ENCODE measurements at regions of chr1 and their contacts with region 1.

Region 1: DNA sequence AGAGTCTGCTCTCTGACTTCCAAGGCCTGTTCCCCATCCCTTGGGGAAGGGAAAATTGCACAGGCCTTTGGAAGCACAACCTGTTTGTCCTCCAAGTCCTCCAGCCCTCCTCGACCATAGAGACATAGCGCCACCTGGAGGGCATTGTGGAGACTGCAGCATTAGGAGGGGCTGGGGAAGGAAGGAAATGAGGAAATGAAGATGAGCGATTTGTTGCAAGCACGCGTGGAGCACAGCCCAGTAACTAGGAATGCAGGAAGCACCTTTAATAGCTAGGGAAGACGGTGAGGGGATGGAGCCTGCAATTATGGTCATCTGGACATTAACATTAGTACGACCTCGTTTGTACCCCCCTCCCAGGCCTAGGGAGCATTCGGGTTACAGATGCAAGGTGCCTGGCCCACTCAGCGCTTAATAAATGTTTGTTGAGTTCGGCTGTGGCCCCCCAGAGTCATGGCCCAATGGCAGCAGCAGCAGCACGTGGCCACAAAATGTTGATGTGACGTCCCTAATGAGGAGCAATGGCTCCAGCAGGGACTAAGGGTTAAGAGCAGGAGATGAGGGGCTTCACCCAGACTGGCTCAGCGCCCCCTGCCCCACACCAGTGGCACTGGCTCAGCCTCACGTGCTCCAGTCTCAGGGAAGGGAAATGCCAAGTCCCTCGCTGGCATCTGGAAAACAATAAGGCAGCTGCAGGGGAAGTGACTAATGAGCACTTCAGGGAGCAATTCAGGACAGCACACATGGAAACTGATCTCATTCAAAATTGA is 8.0 kb upstream of the CAMK2N1 start:
- DNase-seq: peak; percentile 85 to 87
- H3K4me3 ChIP-seq: no peak overlapping the region
- H3K27ac ChIP-seq: peak overlapping the region in 1 of 2 donors; percentile 38
- H3K4me1 ChIP-seq: no peaks in the 10 kb centered on the region
- H3K27me3 ChIP-seq: no peaks in the 10 kb centered on the region
- CTCF ChIP-seq: peak; percentile 94 to 98 (median 98)
- POLR2A ChIP-seq: no peak

Region 2: GRCh38 chr1:19918057-19918456 is 576.0 kb before region 1 on chr1:
- intact Hi-C with region 1: loop called (anchors 10 kb)
- DNase-seq: peak; percentile 79 to 81
- H3K4me3 ChIP-seq: no peak overlapping the region
- H3K27ac ChIP-seq: no peak overlapping the region
- H3K4me1 ChIP-seq: no peaks in the 10 kb centered on the region
- H3K27me3 ChIP-seq: no peaks in the 10 kb centered on the region
- CTCF ChIP-seq: peak; percentile 88 to 93 (median 89)
- POLR2A ChIP-seq: no peak

Region 3: GRCh38 chr1:20212685-20213331 is 281.2 kb before region 1 on chr1:
- intact Hi-C with region 1: loop called (anchors 10 kb)
- DNase-seq: peak; percentile 20 to 25
- H3K4me3 ChIP-seq: no peak overlapping the region
- H3K27ac ChIP-seq: no peak overlapping the region
- H3K4me1 ChIP-seq: no peaks in the 10 kb centered on the region
- H3K27me3 ChIP-seq: no peaks in the 10 kb centered on the region
- CTCF ChIP-seq: peak; percentile 42 to 71 (median 54)
- POLR2A ChIP-seq: no peak

Region 4: DNA sequence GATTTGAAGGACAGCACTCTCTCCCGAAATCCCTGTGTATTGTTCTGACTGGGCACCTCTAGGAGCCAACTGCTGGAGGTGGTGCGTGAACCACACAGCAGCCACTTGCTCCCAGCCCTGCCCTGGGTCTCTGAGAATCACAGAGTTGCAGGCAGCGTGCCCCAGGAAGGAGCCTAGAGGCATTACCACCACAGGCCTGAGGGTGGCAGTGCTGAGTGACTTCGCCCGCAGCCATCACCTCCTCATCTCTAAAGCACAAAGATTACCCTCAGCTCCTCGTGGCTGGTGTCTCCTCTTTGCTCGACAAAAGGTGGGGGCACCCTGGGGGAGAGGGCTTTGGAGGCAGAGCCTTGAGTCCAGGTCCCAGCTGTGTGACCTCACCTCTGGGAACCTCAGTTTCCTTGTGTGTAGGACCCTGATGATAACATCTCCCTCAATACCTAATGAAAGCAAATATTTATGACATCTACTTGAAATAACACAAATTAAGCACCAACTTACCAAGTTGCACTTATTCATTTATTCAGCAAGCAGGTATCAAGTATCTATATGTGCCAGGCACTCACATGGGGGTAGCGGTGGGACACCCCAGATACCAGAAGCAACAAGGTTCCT is 117.0 kb before region 1 on chr1:
- intact Hi-C with region 1: loop called (anchors 10 kb)
- DNase-seq: peak in 1 of 2 donors; percentile 34
- H3K4me3 ChIP-seq: no peak overlapping the region
- H3K27ac ChIP-seq: no peak overlapping the region
- H3K4me1 ChIP-seq: no peaks in the 10 kb centered on the region
- H3K27me3 ChIP-seq: no peaks in the 10 kb centered on the region
- CTCF ChIP-seq: peak; percentile 50 to 64 (median 57)
- POLR2A ChIP-seq: no peak

Region 5: DNA sequence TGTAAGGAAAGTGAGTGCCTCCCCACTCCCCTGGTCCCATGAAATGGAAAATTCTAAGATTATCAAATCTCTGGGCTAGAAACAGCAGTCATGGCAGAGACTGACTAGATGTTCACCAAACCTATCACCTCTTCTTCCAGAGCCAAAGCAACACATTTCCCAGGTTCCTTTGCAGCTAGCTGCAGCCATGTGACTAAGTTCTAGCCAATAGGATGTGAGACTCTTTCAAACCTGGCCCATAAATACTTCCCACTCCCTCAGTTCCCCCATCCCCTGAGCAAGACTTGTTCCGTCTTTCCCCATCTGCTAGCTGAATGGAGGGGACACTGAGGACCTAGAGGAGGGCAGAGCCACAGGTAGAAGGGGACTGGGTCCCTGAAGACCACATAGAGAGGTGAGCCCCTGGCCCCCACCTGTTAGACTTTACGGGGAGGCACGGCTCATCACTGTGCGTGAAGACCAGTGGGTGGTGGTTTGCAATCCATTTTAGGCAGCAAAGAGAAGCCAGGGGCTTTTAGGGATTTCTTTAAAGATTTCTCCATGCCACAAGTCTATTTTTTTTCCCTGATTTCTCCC is 75.6 kb after region 1 on chr1:
- intact Hi-C with region 1: no loop called
- DNase-seq: no peak
- H3K4me3 ChIP-seq: no peak overlapping the region
- H3K27ac ChIP-seq: no peak overlapping the region
- H3K4me1 ChIP-seq: no peaks in the 10 kb centered on the region
- H3K27me3 ChIP-seq: no peaks in the 10 kb centered on the region
- CTCF ChIP-seq: no peak
- POLR2A ChIP-seq: no peak

Region 6: DNA sequence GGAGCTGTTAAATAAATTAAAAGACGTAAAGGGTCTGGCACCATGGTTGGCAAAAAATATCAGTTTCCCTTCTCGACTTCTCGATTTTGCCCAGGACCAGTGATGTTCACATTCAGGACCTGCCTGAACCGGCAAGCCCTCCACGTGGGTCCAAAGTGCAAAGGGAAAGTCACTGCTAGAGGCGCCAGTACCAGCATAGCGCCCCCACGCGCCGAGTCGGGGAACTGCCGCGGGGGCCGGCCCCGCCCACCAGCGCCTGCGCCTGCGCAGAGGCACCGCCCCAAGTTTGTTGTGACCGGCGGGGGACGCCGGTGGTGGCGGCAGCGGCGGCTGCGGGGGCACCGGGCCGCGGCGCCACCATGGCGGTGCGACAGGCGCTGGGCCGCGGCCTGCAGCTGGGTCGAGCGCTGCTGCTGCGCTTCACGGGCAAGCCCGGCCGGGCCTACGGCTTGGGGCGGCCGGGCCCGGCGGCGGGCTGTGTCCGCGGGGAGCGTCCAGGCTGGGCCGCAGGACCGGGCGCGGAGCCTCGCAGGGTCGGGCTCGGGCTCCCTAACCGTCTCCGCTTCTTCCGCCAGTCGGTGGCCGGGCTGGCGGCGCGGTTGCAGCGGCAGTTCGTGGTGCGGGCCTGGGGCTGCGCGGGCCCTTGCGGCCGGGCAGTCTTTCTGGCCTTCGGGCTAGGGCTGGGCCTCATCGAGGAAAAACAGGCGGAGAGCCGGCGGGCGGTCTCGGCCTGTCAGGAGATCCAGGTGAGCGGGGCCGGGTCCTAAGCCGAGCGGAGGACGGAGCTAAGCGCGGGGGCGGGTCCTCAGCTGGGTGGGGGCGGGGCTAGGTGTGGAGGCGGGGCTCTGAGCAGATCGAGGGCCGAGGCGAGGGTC is 139.4 kb after region 1 on chr1 and contains the start of gene PINK1:
- intact Hi-C with region 1: no loop called
- DNase-seq: peak; percentile 72 to 89
- H3K4me3 ChIP-seq: peak within 1 kb of the TSS; percentile 53 to 97
- H3K27ac ChIP-seq: peak within 1 kb of the TSS; percentile 83 to 95
- H3K4me1 ChIP-seq: peaks cover 0 to 5% of the 10 kb centered on the region in 2 donors
- H3K27me3 ChIP-seq: no peaks in the 10 kb centered on the region
- CTCF ChIP-seq: peak; percentile 84 to 99 (median 98)
- POLR2A ChIP-seq: peak; percentile 90 to 94
- total RNA-seq, gene PINK1: 55.6 to 67.4 (median 62.8) TPM

Region 7: DNA sequence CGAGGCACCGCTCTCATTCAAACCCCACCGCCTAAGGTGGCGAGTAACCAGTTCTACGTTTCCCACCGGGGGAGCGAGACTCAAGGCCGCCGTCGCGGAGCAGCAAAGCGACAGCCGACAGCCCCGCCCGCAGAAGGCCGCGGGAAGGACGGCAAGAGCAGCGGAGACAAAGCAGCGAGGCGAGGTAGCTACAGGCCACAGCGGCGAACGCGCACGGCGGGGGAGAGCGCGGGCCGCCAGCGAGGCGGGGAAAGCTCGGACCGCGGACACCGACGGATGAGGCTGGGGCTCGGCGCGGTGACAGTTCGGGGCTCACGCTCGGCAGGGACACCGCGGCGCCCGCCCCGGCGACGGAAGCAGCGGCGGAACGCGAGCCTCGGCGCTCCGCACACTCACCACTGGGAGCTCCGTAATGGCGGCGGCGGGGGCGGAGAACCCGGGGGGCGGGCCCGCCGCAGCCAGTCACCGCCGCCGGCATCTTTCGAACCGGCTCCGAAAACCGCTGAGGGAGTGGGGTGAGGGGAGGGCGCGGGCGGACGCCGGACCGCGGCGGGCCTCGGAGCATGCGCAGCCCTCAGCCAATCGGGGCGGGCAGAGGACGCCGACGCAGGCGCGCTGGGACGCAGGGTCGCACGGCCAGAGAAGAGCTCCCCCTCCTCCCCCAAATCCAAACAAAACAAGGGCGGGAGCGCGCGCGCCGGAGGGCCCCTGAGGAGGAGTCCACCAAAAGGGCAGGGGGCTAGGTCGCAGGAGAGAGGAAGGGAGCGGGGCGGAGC is 292.4 kb after region 1 on chr1:
- intact Hi-C with region 1: no loop called
- DNase-seq: peak; percentile 92 to 96
- H3K4me3 ChIP-seq: peak overlapping the region; percentile 75 to 98
- H3K27ac ChIP-seq: peak overlapping the region; percentile 99
- H3K4me1 ChIP-seq: no peaks in the 10 kb centered on the region
- H3K27me3 ChIP-seq: no peaks in the 10 kb centered on the region
- CTCF ChIP-seq: peak in 1 of 4 experiments; percentile 6
- POLR2A ChIP-seq: peak; percentile 88 to 90